ENCODE measurements at regions of chr16 and their contacts with region 1.

Region 1: DNA sequence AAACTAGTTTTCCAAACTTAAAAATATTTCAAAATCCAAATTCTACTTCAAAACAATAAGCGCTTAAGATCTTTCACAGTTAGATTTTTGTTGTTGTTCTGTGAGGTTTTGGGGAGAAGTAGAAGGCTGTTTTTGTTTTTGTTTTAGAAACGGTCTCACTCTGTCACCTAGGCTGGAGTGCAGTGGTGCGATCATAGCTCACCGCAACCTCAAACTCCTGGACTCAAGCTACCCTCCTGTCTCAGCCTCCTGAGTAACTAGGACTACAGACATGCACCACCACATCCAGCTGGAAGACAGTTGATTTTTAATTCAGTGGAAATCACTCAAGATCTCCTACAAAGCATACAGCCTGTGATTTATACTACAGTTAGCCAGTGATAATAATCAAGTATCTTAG is 2.7 kb downstream of the SHCBP1 start:
- DNase-seq: no peak
- ATAC-seq: no peak
- H3K4me3 ChIP-seq: no peak overlapping the region
- H3K4me3 Mint-ChIP-seq: no peak overlapping the region
- H3K27ac ChIP-seq: no peak overlapping the region
- H3K27ac Mint-ChIP-seq: no peak overlapping the region
- H3K4me1 ChIP-seq: peaks cover 10% of the 10 kb centered on the region
- H3K4me1 Mint-ChIP-seq: peaks cover 16% of the 10 kb centered on the region
- H3K27me3 ChIP-seq: no peaks in the 10 kb centered on the region
- H3K27me3 Mint-ChIP-seq: peaks cover 4% of the 10 kb centered on the region
- CTCF ChIP-seq: no peak

Region 2: GRCh38 chr16:46549477-46549876 is 69.0 kb before region 1 on chr16:
- CTCF ChIA-PET with region 1: no interaction called
- POLR2A ChIA-PET with region 1: no interaction called
- intact Hi-C with region 1: no loop called
- DNase-seq: no peak
- ATAC-seq: no peak
- H3K4me3 ChIP-seq: no peak overlapping the region
- H3K4me3 Mint-ChIP-seq: no peak overlapping the region
- H3K27ac ChIP-seq: no peak overlapping the region
- H3K27ac Mint-ChIP-seq: no peak overlapping the region
- H3K4me1 ChIP-seq: no peaks in the 10 kb centered on the region
- H3K4me1 Mint-ChIP-seq: no peaks in the 10 kb centered on the region
- H3K27me3 ChIP-seq: no peaks in the 10 kb centered on the region
- H3K27me3 Mint-ChIP-seq: peaks cover 20% of the 10 kb centered on the region
- CTCF ChIP-seq: no peak

Region 3: GRCh38 chr16:46638947-46639925 is 20.7 kb after region 1 on chr16:
- CTCF ChIA-PET with region 1: no interaction called
- POLR2A ChIA-PET with region 1: no interaction called
- intact Hi-C with region 1: no loop called
- DNase-seq: no peak
- ATAC-seq: no peak
- H3K4me3 ChIP-seq: no peak overlapping the region
- H3K4me3 Mint-ChIP-seq: no peak overlapping the region
- H3K27ac ChIP-seq: no peak overlapping the region
- H3K27ac Mint-ChIP-seq: no peak overlapping the region
- H3K4me1 ChIP-seq: no peaks in the 10 kb centered on the region
- H3K4me1 Mint-ChIP-seq: no peaks in the 10 kb centered on the region
- H3K27me3 ChIP-seq: no peaks in the 10 kb centered on the region
- H3K27me3 Mint-ChIP-seq: no peaks in the 10 kb centered on the region
- CTCF ChIP-seq: no peak

Region 4: DNA sequence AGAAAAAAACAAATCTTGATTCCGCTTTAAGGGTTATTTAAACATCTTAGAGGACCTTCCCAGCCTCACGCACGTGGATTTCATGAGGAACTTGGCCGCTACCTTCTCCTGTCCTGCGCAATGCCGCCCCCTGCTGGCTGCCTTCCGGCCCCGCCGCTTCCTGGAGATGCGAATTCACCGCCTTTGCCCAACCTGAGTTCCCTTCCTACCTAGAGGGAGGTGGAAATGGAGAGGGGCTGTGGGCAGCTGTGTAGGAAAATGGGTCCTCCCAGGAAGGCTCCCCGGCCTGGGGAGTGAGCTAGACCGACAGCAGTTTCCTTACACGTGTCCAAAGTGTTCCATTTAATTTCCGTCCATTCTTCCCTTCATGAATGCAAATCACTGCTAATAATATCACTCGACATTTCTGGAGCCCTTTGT is 1538.3 kb after region 1 on chr16:
- CTCF ChIA-PET with region 1: no interaction called
- POLR2A ChIA-PET with region 1: no interaction called
- intact Hi-C with region 1: loop called in 1 of 2 experiments (anchors 5 kb)
- DNase-seq: peak; percentile 62 to 86 (median 76)
- ATAC-seq: peak; percentile 74
- H3K4me3 ChIP-seq: no peak overlapping the region
- H3K4me3 Mint-ChIP-seq: no peak overlapping the region
- H3K27ac ChIP-seq: no peak overlapping the region
- H3K27ac Mint-ChIP-seq: no peak overlapping the region
- H3K4me1 ChIP-seq: peaks cover 7% of the 10 kb centered on the region
- H3K4me1 Mint-ChIP-seq: no peaks in the 10 kb centered on the region
- H3K27me3 ChIP-seq: peaks cover 0 to 3% of the 10 kb centered on the region in 2 experiments
- H3K27me3 Mint-ChIP-seq: peaks cover 14% of the 10 kb centered on the region
- CTCF ChIP-seq: peak; percentile 94